Transverse colon (tissue), 4 donors: ENCODE measurements at regions of chr18 and their contacts with region 1.

Region 1: GRCh38 chr18:41244591-41245037 is 710.4 kb upstream of the PIK3C3 start:
- DNase-seq: no peak
- H3K4me3 ChIP-seq: no peak overlapping the region
- H3K27ac ChIP-seq: no peak overlapping the region
- H3K4me1 ChIP-seq: no peaks in the 10 kb centered on the region
- H3K27me3 ChIP-seq: no peaks in the 10 kb centered on the region
- CTCF ChIP-seq: no peak
- EP300 ChIP-seq: no peak
- POLR2A ChIP-seq: no peak

Region 2: DNA sequence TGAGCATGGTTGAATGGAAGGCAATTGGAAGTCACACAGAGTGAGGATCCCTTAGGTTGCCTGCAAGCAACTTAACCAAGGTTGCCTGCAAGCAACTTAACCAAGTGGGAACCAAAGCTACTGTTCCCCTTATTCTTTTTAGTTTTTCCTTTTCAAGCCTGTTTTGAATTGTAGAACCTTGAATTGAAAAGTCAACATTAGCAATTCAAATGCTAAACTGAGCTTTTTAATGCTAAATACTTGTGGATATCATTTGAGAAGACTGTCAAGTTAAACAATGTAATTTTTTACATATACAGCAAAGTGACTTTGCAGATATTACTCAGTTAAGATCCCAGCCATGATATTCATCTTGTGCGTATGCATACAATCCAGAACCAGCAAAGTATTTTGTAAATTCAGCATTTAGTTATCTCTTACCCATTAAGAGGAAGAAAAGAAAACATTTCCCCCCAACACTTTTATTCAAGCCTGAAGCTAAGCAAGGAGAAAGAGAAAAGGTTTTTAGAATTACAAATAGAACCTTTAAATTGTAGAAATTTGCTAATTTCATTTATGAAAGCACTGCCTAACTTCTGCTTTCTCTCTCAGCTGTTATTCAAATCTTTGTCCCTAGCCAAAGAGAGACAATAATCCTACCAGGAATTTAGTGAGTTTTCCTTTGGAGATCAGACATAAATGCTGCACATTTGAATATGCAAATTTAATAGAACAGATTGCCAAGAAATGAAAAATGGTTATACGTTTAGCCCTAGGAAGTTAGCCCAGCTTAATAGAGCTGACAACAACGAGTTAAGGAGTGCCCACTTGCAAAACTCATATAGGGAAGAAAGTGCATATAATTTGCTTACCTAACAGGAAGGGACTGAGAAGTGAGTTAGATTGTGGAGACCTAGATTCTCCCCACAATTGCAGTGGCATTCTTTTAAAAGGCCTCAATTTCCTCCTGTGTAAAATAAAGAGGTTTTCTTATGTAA is 67.2 kb after region 1 on chr18:
- in situ Hi-C with region 1: loop called in 1 of 4 experiments (anchors 10 kb)
- intact Hi-C with region 1: no loop called
- DNase-seq: no peak
- H3K4me3 ChIP-seq: no peak overlapping the region
- H3K27ac ChIP-seq: no peak overlapping the region
- H3K4me1 ChIP-seq: no peaks in the 10 kb centered on the region
- H3K27me3 ChIP-seq: no peaks in the 10 kb centered on the region
- CTCF ChIP-seq: no peak
- EP300 ChIP-seq: no peak
- POLR2A ChIP-seq: no peak

Region 3: DNA sequence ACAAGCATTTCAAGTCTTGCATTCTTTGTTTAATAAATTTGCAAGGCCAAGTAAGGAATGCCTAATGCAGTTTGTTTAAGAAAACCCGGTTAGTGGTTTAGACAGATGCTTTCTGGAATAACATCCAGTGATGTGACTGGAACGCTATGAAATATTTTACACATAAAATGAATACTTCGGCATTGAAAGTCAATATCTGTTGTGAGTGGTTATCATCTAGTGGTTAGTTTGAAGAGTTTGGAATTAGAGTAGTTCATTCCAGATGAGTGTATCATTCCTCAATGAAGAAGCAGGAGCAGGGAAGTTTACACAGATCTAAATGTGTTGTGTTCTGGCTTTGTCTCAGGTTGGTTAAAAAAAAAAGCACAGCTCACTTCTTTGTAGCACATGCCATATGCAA is 102.4 kb after region 1 on chr18:
- in situ Hi-C with region 1: no loop called
- intact Hi-C with region 1: no loop called
- DNase-seq: no peak
- H3K4me3 ChIP-seq: no peak overlapping the region
- H3K27ac ChIP-seq: no peak overlapping the region
- H3K4me1 ChIP-seq: no peaks in the 10 kb centered on the region
- H3K27me3 ChIP-seq: no peaks in the 10 kb centered on the region
- CTCF ChIP-seq: no peak
- EP300 ChIP-seq: no peak
- POLR2A ChIP-seq: no peak